ENCODE measurements at regions of chr14 and their contacts with region 1.

Region 1: GRCh38 chr14:57268161-57269069 is at the starts of genes AP5M1 and EXOC5:
- DNase-seq: peak; percentile 96
- ATAC-seq: peak; percentile 79
- H3K4me3 ChIP-seq: peak within 1 kb of the TSS; percentile 77 to 98 (median 86)
- H3K4me3 Mint-ChIP-seq: peak within 1 kb of the TSS; percentile 100
- H3K27ac ChIP-seq: peak within 1 kb of the TSS; percentile 74 to 90
- H3K27ac Mint-ChIP-seq: peak within 1 kb of the TSS; percentile 100
- H3K4me1 ChIP-seq: peaks cover 20% of the 10 kb centered on the region in 2 donors
- H3K4me1 Mint-ChIP-seq: peaks cover 48% of the 10 kb centered on the region
- H3K27me3 ChIP-seq: no peaks in the 10 kb centered on the region
- H3K27me3 Mint-ChIP-seq: no peaks in the 10 kb centered on the region
- CTCF ChIP-seq: no peak
- total RNA-seq, gene AP5M1: 53.6 and 54.9 TPM in 2 replicates
- total RNA-seq, gene EXOC5: 56.6 and 60.0 TPM in 2 replicates

Region 2: GRCh38 chr14:55579724-55580469 is 1688.5 kb before region 1 on chr14 and contains the start of gene KTN1:
- CTCF ChIA-PET with region 1: no interaction called
- POLR2A ChIA-PET with region 1: no interaction called
- intact Hi-C with region 1: loop called (anchors 5 kb)
- DNase-seq: peak; percentile 91
- ATAC-seq: peak; percentile 90
- H3K4me3 ChIP-seq: peak within 1 kb of the TSS; percentile 72 to 96 (median 85)
- H3K4me3 Mint-ChIP-seq: peak within 1 kb of the TSS; percentile 96
- H3K27ac ChIP-seq: peak within 1 kb of the TSS; percentile 59 to 91
- H3K27ac Mint-ChIP-seq: peak within 1 kb of the TSS; percentile 96
- H3K4me1 ChIP-seq: peaks cover 37 to 39% of the 10 kb centered on the region in 2 donors
- H3K4me1 Mint-ChIP-seq: peaks cover 29% of the 10 kb centered on the region
- H3K27me3 ChIP-seq: no peaks in the 10 kb centered on the region
- H3K27me3 Mint-ChIP-seq: no peaks in the 10 kb centered on the region
- CTCF ChIP-seq: no peak
- total RNA-seq, gene KTN1: 120 and 123 TPM in 2 replicates

Region 3: DNA sequence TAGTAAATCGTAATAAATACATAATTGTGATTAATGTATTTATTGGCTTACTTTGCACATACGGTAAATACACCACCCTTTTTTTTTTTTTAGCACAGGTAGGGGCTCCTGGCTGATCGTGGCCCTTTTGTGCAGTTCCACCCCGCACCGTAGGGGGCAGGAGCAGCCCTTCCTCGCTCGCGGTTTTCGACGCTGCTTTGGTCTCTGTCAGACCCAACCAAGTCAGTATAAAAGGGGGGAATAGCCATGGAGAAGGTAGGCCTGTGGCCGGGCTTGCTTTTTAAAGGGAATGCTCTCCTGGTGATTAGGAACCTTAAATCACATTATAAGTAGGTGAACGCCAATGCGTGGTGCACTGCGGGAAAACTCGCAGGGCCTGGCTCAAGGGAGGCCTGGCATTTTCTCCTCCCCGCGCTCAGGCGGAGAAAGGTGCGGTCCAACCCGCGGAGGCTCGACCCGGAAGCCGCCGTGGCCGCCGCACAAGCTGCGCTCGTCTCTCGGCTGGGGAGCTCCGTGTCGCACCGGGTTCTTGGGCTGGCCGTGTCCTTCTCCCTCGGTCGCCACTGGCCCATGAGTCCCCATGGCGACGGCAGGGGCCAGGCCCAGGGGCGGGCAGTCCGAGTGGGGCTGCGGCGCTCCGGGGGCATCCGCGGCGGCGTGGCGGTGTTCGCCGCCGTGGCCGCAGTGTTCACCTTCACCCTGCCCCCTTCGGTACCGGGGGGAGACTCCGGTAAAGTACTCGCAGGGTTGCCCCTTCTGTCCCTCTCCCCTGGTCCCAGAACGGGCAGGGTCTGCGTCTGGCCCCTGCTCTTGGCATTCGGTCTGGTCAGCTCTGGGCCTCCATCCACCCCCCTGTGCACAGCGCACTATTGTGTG is 688.8 kb before region 1 on chr14 and contains the start of gene TMEM260:
- CTCF ChIA-PET with region 1: interaction called, 3 read pairs
- POLR2A ChIA-PET with region 1: interaction called, 6 read pairs
- intact Hi-C with region 1: loop called (anchors 1 kb)
- DNase-seq: peak; percentile 97
- ATAC-seq: peak; percentile 94
- H3K4me3 ChIP-seq: peak within 1 kb of the TSS; percentile 75 to 97 (median 90)
- H3K4me3 Mint-ChIP-seq: peak within 1 kb of the TSS; percentile 96
- H3K27ac ChIP-seq: peak within 1 kb of the TSS; percentile 78 to 91
- H3K27ac Mint-ChIP-seq: peak within 1 kb of the TSS; percentile 98
- H3K4me1 ChIP-seq: peaks cover 23 to 24% of the 10 kb centered on the region in 2 donors
- H3K4me1 Mint-ChIP-seq: peaks cover 38% of the 10 kb centered on the region
- H3K27me3 ChIP-seq: peaks cover 0 to 4% (median 0%) of the 10 kb centered on the region in 4 experiments
- H3K27me3 Mint-ChIP-seq: peaks cover 3% of the 10 kb centered on the region
- CTCF ChIP-seq: peak; percentile 97
- total RNA-seq, gene TMEM260: 33.9 and 39.3 TPM in 2 replicates

Region 4: GRCh38 chr14:57232006-57232405 is 36.4 kb before region 1 on chr14:
- CTCF ChIA-PET with region 1: no interaction called
- POLR2A ChIA-PET with region 1: no interaction called
- intact Hi-C with region 1: loop called (anchors 5 kb)
- DNase-seq: no peak
- ATAC-seq: no peak
- H3K4me3 ChIP-seq: no peak overlapping the region
- H3K4me3 Mint-ChIP-seq: no peak overlapping the region
- H3K27ac ChIP-seq: no peak overlapping the region
- H3K27ac Mint-ChIP-seq: no peak overlapping the region
- H3K4me1 ChIP-seq: no peaks in the 10 kb centered on the region
- H3K4me1 Mint-ChIP-seq: no peaks in the 10 kb centered on the region
- H3K27me3 ChIP-seq: no peaks in the 10 kb centered on the region
- H3K27me3 Mint-ChIP-seq: no peaks in the 10 kb centered on the region
- CTCF ChIP-seq: no peak

Measured in B cell (primary cell).